WTC11 (cell line): ENCODE measurements at regions of chr13 and their contacts with region 1.

Region 1: DNA sequence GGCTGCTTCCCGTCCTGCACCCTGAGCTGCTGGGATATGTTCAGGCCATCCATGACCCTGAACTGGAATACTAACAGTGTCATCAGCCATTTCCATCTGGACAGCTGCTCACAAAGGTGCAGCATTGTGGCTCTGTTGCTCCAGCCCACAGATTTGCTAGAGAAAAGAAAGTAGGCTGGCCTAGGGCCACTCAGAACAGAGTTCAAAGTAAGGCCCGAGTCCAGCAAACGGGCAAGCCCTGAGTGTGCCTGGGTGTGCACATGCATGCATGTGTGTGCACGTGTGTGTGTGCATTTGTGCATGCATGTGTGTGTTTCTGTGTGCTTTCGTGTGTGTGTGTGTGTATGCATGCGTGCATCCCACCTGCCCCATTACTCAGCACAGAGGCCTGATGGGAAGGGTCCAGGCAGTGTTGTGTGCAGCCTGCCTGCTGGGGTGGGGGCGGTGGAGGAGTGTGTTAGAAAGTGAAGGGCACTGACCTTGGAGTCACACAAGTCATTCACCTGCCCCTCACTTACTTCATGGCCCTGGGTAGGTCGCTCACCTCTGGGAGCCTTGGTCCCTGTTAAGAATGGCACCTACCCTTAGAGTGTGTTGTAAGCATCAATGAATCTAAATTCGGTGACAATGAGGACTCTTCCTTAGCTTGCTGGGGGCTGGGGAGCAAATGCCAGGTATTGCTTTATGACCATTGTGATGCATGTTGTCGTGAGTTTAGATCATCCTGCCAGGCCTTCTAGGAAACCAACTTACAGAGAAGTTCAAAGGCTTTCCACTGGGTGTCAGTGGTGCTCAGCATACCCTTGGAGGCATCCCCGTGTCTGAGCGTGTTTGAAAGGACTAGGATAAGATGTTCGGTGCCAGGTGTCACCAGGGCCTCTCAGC is 53.2 kb downstream of the GPR12 start:
- DNase-seq: peak; percentile 71
- ATAC-seq: peak; percentile 87
- H3K4me3 Mint-ChIP-seq: no peak overlapping the region
- H3K27ac Mint-ChIP-seq: no peak overlapping the region
- H3K4me1 Mint-ChIP-seq: peaks cover 21% of the 10 kb centered on the region
- H3K27me3 Mint-ChIP-seq: peaks cover 1% of the 10 kb centered on the region
- CTCF ChIP-seq: no peak

Region 2: DNA sequence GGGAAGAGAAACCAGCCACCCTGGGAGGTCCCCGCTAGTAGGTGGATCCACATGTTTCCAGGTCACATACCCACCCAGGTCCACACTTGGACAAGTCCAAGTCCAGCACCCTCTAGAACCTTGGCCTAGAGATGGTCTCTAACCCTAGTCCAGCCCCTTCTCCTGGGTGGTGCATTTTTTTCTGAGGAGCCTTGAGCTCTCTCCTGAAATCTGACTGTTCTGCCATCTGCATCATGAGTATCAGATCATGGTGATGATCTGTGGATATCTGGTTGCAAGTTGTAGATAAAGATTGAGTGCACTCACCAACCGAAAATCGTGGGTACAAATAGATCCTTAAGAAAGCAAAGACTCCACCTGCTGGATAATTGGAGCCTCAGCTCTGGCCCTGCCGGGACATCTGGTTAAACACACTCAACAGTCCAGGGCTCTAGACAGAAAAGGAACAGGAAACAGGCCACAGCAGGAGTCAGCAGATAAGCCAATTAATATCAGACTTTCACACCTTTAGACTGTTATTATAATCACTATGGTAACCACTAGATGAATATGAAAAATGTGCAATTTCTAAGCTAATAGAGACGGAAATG is 12.1 kb after region 1 on chr13:
- CTCF ChIA-PET with region 1: interaction called, 11 read pairs
- POLR2A ChIA-PET with region 1: no interaction called
- DNase-seq: no peak
- ATAC-seq: peak; percentile 58; the same call in 1 of the 2 replicates
- H3K4me3 Mint-ChIP-seq: no peak overlapping the region
- H3K27ac Mint-ChIP-seq: no peak overlapping the region
- H3K4me1 Mint-ChIP-seq: no peaks in the 10 kb centered on the region
- H3K27me3 Mint-ChIP-seq: no peaks in the 10 kb centered on the region
- CTCF ChIP-seq: no peak

Region 3: GRCh38 chr13:26759907-26760834 is 52.8 kb after region 1 on chr13 and contains the start of gene GPR12:
- CTCF ChIA-PET with region 1: no interaction called
- POLR2A ChIA-PET with region 1: no interaction called
- DNase-seq: peak; percentile 16
- ATAC-seq: peak; percentile 65
- H3K4me3 Mint-ChIP-seq: peak within 1 kb of the TSS; percentile 81
- H3K27ac Mint-ChIP-seq: no peak within 1 kb of the TSS
- H3K4me1 Mint-ChIP-seq: peaks cover 9% of the 10 kb centered on the region; the same call in 1 of the 2 replicates
- H3K27me3 Mint-ChIP-seq: peaks cover 61% of the 10 kb centered on the region
- CTCF ChIP-seq: no peak
- total RNA-seq, gene GPR12: 0.07 to 0.09 TPM in 2 of 3 replicates, not detected in the other

Region 4: GRCh38 chr13:26929971-26930730 is 222.8 kb after region 1 on chr13:
- CTCF ChIA-PET with region 1: interaction called, 30 read pairs
- POLR2A ChIA-PET with region 1: no interaction called
- DNase-seq: peak; percentile 89
- ATAC-seq: peak; percentile 93
- H3K4me3 Mint-ChIP-seq: peak overlapping the region; percentile 59
- H3K27ac Mint-ChIP-seq: 0 out of 2 replicates have a peak overlapping the region, but pooled peaks have one; percentile 33
- H3K4me1 Mint-ChIP-seq: 0 out of 2 replicates have a peak, but pooled peaks cover 2% of the 10 kb centered on the region
- H3K27me3 Mint-ChIP-seq: no peaks in the 10 kb centered on the region; the same call in 1 of the 2 replicates
- CTCF ChIP-seq: peak; percentile 97